ENCODE measurements at regions of chr4 and their contacts with region 1.

Region 1: DNA sequence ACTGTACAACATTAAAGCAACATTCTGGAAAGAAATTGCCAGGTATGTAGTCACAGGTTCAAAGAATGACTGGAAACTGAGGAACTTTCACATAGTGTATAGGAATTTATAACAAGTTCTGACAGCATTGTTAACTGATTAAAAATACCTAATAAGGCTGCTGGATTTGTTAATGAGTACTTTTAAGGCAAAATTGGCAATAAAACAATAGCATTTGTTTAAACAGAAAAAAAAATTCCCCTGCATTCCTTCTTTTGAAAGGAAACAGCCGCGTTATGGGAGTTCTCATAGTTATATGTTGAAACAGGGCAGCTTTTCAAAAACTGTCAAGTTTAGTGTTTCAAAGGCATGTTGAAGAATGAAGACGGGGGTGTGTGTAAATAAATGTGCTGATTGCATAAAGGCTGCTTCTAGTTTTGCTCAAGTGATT is 282.5 kb upstream of the FAT1 start:
- DNase-seq: no peak
- ATAC-seq: no peak

Region 2: GRCh38 chr4:186304866-186305511 is 701.2 kb before region 1 on chr4:
- intact Hi-C with region 1: loop called (anchors 10 kb)
- DNase-seq: no peak
- ATAC-seq: no peak

Measured in Right ventricle myocardium inferior (tissue), 1 donor.